ENCODE measurements at regions of chr9 and their contacts with region 1.

Region 1: GRCh38 chr9:99259231-99259918 is 37.3 kb downstream of the SEC61B start:
- DNase-seq: peak; percentile 92 to 98
- ATAC-seq: peak; percentile 80 to 86 (median 84)
- H3K4me3 ChIP-seq: peak overlapping the region; percentile 58
- H3K27ac ChIP-seq: peak overlapping the region; percentile 95
- H3K4me1 ChIP-seq: peaks cover 23% of the 10 kb centered on the region
- H3K27me3 ChIP-seq: no peaks in the 10 kb centered on the region
- CTCF ChIP-seq: no peak

Region 2: DNA sequence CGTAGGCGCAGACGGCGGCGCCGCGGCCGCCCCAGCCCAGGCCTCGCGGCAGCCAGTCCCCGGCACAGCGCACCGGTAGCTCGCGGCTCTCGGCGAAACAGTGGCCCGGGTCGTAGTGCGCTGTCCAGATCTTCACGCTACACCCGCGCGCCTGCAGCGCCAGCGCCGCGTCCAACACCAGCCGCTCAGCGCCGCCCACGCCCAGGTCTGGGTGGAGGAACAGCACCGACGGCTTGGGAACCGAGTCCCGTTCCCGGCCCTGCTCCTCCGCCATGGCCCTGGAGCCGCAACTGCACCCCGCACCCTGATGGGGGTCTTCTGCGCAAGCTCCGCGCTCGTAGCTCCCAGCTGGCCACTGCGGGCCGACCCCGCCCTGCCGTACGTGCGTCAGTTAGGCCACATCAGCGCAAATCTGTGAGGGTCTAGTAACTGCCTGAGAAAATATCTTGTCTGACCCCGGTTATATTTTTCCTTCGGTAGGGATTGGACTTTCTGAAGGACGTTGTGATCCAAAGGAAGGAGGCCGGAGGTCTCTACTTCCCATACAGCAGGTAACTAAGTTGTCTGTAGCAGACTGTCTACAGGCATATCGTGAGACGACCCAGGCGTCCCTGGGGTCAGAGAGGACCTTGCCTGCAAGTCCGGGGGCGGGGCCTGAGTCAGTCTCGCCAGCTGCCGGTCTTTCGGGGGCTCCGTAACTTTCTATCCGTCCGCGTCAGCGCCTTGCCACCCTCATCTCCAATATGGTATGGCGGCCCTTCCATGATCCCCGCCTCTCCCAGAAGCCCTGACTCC is 37.6 kb before region 1 on chr9 and contains the starts of genes ALG2 and SEC61B:
- intact Hi-C with region 1: loop called (anchors 5 kb)
- DNase-seq: peak; percentile 96 to 98
- ATAC-seq: peak; percentile 96 to 97 (median 96)
- H3K4me3 ChIP-seq: peak within 1 kb of the TSS; percentile 80
- H3K27ac ChIP-seq: peak within 1 kb of the TSS; percentile 99
- H3K4me1 ChIP-seq: peaks cover 67% of the 10 kb centered on the region
- H3K27me3 ChIP-seq: no peaks in the 10 kb centered on the region
- CTCF ChIP-seq: no peak
- total RNA-seq, gene ALG2: 8.3 to 18.8 (median 12.7) TPM
- total RNA-seq, gene SEC61B: 17.5 to 49.6 (median 36.8) TPM

Region 3: GRCh38 chr9:99353408-99353807 is 94.0 kb after region 1 on chr9:
- intact Hi-C with region 1: loop called (anchors 2 to 5 kb)
- DNase-seq: peak in 1 of 2 donors; percentile 52
- ATAC-seq: no peak
- H3K4me3 ChIP-seq: no peak overlapping the region
- H3K27ac ChIP-seq: no peak overlapping the region
- H3K4me1 ChIP-seq: peaks cover 19% of the 10 kb centered on the region
- H3K27me3 ChIP-seq: no peaks in the 10 kb centered on the region
- CTCF ChIP-seq: no peak

Region 4: DNA sequence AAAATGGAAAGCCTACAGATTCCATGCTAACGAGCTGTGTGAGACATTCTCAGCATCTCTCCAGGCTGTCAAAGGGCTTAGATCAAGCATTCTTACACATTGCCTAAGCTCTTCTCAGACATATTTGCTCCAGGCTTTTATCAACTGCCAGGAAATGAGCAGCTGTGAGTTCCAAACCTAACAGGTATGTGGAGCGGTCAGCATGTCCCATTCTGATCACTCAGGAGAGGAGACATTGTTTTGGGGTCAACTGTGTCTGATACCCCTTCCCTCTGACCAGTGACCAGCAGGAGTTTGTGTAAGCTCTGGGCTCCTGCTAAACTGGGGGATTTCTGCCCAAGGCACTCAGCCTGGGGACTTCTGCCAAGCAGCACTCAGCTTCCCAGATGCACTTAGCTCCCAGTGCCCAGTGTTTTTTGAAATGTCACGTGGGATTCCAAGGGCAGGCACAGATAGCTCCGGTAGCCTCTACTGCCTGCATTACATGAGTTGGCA is 191.8 kb after region 1 on chr9:
- intact Hi-C with region 1: no loop called
- DNase-seq: no peak
- ATAC-seq: peak; percentile 88 to 91 (median 90)
- H3K4me3 ChIP-seq: no peak overlapping the region
- H3K27ac ChIP-seq: peak overlapping the region; percentile 51
- H3K4me1 ChIP-seq: peaks cover 17% of the 10 kb centered on the region
- H3K27me3 ChIP-seq: no peaks in the 10 kb centered on the region
- CTCF ChIP-seq: no peak

Region 5: GRCh38 chr9:99906403-99907207 is 647.2 kb after region 1 on chr9 and contains the start of gene STX17:
- intact Hi-C with region 1: loop called in 1 of 2 experiments (anchors 2 kb)
- DNase-seq: peak; percentile 81 to 89
- ATAC-seq: peak; percentile 94 to 97 (median 96)
- H3K4me3 ChIP-seq: peak within 1 kb of the TSS; percentile 99
- H3K27ac ChIP-seq: peak within 1 kb of the TSS; percentile 99
- H3K4me1 ChIP-seq: peaks cover 22% of the 10 kb centered on the region
- H3K27me3 ChIP-seq: no peaks in the 10 kb centered on the region
- CTCF ChIP-seq: peak; percentile 11
- total RNA-seq, gene STX17: 19.6 to 31.1 (median 28.5) TPM

Measured in psoas muscle (tissue), 8 donors.